CD4-positive, alpha-beta T cell (primary cell): ENCODE measurements at regions of chr2 and their contacts with region 1.

Region 1: GRCh38 chr2:84856787-84857186 is 24.1 kb downstream of the TRABD2A start:
- DNase-seq: peak in 5 of 14 experiments; percentile 37 to 65 (median 55)
- ATAC-seq: peak; percentile 51
- H3K4me3 ChIP-seq: no peak overlapping the region
- H3K4me3 Mint-ChIP-seq: peak overlapping the region; percentile 32
- H3K27ac ChIP-seq: peak overlapping the region; percentile 53 to 69
- H3K27ac Mint-ChIP-seq: peak overlapping the region; percentile 94
- H3K4me1 ChIP-seq: peaks cover 95% of the 10 kb centered on the region
- H3K4me1 Mint-ChIP-seq: peaks cover 96% of the 10 kb centered on the region
- H3K27me3 ChIP-seq: no peaks in the 10 kb centered on the region
- H3K27me3 Mint-ChIP-seq: no peaks in the 10 kb centered on the region
- CTCF ChIP-seq: no peak

Region 2: GRCh38 chr2:84649487-84650142 is 207.2 kb before region 1 on chr2:
- CTCF ChIA-PET with region 1: no interaction called
- POLR2A ChIA-PET with region 1: interaction called, 3 read pairs
- intact Hi-C with region 1: loop called in 1 of 2 experiments (anchors 5 kb)
- DNase-seq: peak in 2 of 14 experiments; percentile 13 to 78
- ATAC-seq: peak; percentile 41
- H3K4me3 ChIP-seq: no peak overlapping the region
- H3K4me3 Mint-ChIP-seq: peak overlapping the region; percentile 40
- H3K27ac ChIP-seq: no peak overlapping the region
- H3K27ac Mint-ChIP-seq: peak overlapping the region; percentile 81
- H3K4me1 ChIP-seq: peaks cover 23% of the 10 kb centered on the region
- H3K4me1 Mint-ChIP-seq: peaks cover 84% of the 10 kb centered on the region
- H3K27me3 ChIP-seq: no peaks in the 10 kb centered on the region
- H3K27me3 Mint-ChIP-seq: no peaks in the 10 kb centered on the region
- CTCF ChIP-seq: no peak

Region 3: GRCh38 chr2:84840306-84840705 is 16.5 kb before region 1 on chr2:
- CTCF ChIA-PET with region 1: interaction called, 3 read pairs
- POLR2A ChIA-PET with region 1: interaction called, 132 read pairs
- intact Hi-C with region 1: loop called in 1 of 2 experiments (anchors 2 kb)
- DNase-seq: peak in 1 of 14 experiments; percentile 59
- ATAC-seq: peak; percentile 28
- H3K4me3 ChIP-seq: peak overlapping the region; percentile 22
- H3K4me3 Mint-ChIP-seq: peak overlapping the region; percentile 80
- H3K27ac ChIP-seq: peak overlapping the region; percentile 81 to 90
- H3K27ac Mint-ChIP-seq: peak overlapping the region; percentile 96
- H3K4me1 ChIP-seq: peaks cover 73% of the 10 kb centered on the region
- H3K4me1 Mint-ChIP-seq: peaks cover 91% of the 10 kb centered on the region
- H3K27me3 ChIP-seq: no peaks in the 10 kb centered on the region
- H3K27me3 Mint-ChIP-seq: no peaks in the 10 kb centered on the region
- CTCF ChIP-seq: no peak

Region 4: GRCh38 chr2:85369500-85369899 is 512.7 kb after region 1 on chr2:
- CTCF ChIA-PET with region 1: no interaction called
- POLR2A ChIA-PET with region 1: no interaction called
- intact Hi-C with region 1: no loop called
- DNase-seq: no peak
- ATAC-seq: no peak
- H3K4me3 ChIP-seq: no peak overlapping the region
- H3K4me3 Mint-ChIP-seq: no peak overlapping the region
- H3K27ac ChIP-seq: no peak overlapping the region
- H3K27ac Mint-ChIP-seq: no peak overlapping the region
- H3K4me1 ChIP-seq: no peaks in the 10 kb centered on the region
- H3K4me1 Mint-ChIP-seq: no peaks in the 10 kb centered on the region
- H3K27me3 ChIP-seq: no peaks in the 10 kb centered on the region
- H3K27me3 Mint-ChIP-seq: no peaks in the 10 kb centered on the region
- CTCF ChIP-seq: no peak